ENCODE measurements at regions of chr20 and their contacts with region 1.

Region 1: GRCh38 chr20:13825465-13825864 is 40.6 kb downstream of the NDUFAF5 start:
- DNase-seq: no peak
- CTCF ChIP-seq: no peak

Region 2: DNA sequence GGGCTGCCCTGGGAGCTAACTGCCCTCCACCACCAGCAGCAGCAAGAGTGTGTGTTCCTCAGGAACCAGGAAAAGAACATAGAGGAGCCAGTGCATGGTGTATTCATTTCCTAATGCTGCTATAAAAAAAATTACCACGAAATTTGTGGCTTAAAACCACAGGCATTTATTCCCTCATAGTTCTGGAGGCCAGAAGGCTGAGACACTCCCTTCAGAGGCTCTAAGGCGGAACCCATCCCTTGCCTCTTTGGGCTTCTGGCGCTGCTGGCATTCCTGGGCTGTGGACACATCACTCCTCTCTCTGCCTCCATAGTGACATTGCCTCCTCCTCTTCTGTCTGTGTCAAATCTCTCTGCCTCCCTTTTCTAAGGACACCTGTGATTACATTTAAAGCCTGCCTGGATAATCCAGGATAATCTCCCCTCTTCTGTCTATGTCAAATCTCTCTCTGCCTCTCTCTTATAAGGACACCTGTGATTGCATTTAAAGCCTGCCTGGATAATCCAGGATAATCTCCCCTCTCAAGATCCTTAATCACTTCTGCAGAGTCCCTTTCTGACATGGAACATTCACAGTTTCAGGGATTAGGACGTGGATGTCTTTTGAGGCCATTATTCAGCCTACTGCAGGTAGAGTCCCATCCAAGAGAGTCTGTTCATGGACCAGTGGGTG is 14.1 kb after region 1 on chr20:
- CTCF ChIA-PET with region 1: interaction called, 19 read pairs
- POLR2A ChIA-PET with region 1: no interaction called
- DNase-seq: no peak
- CTCF ChIP-seq: no peak

Region 3: DNA sequence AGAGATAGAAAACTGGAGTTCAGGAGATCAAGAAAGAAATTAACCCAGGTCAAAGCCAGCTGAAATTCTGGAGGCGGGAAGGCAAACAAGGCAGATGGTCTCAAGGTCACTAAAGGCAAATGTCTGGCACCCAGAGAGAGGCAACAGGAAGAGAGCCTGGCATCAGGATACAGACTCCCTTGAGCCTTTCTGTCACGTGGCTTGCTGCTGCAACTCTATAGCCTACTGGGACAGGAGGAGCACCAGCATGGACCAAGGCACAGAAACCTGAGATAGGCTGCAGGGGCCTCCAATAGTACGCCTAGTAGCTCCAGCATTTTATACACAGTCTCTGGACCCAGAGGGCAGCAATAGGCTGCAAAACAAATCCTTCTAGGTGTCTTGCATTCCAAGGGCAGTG is 89.8 kb after region 1 on chr20:
- CTCF ChIA-PET with region 1: no interaction called
- POLR2A ChIA-PET with region 1: no interaction called
- DNase-seq: no peak
- CTCF ChIP-seq: no peak

Measured in GM10248 (cell line).